ENCODE measurements at regions of chr4 and their contacts with region 1.

Region 1: GRCh38 chr4:26860157-26860921 is at the start of gene STIM2:
- DNase-seq: peak; percentile 96 to 99 (median 97)
- ATAC-seq: peak; percentile 93 to 96 (median 94)
- H3K4me3 ChIP-seq: peak within 1 kb of the TSS; percentile 61 to 93 (median 82)
- H3K27ac ChIP-seq: peak within 1 kb of the TSS; percentile 56 to 97 (median 94)
- H3K4me1 ChIP-seq: peaks cover 0 to 63% (median 39%) of the 10 kb centered on the region in 12 donors
- H3K27me3 ChIP-seq: no peaks in the 10 kb centered on the region
- CTCF ChIP-seq: peak in 10 of 12 donors; percentile 12 to 55 (median 32)
- POLR2A ChIP-seq: peak in 1 of 2 donors; percentile 94
- total RNA-seq, gene STIM2: 7.5 to 17.3 (median 9.9) TPM

Region 2: GRCh38 chr4:26459054-26459755 is 401.1 kb before region 1 on chr4:
- intact Hi-C with region 1: loop called in 1 of 10 experiments (anchors 10 kb)
- DNase-seq: no peak
- ATAC-seq: peak in 2 of 4 donors; percentile 59 to 60
- H3K4me3 ChIP-seq: no peak overlapping the region
- H3K27ac ChIP-seq: peak overlapping the region in 1 of 12 donors; percentile 29
- H3K4me1 ChIP-seq: peaks cover 0 to 6% (median 0%) of the 10 kb centered on the region in 12 donors
- H3K27me3 ChIP-seq: no peaks in the 10 kb centered on the region
- CTCF ChIP-seq: peak; percentile 38 to 68 (median 57)
- POLR2A ChIP-seq: no peak

Region 3: GRCh38 chr4:26692014-26692726 is 168.2 kb before region 1 on chr4:
- intact Hi-C with region 1: no loop called
- DNase-seq: no peak
- ATAC-seq: no peak
- H3K4me3 ChIP-seq: no peak overlapping the region
- H3K27ac ChIP-seq: no peak overlapping the region
- H3K4me1 ChIP-seq: no peaks in the 10 kb centered on the region
- H3K27me3 ChIP-seq: no peaks in the 10 kb centered on the region
- CTCF ChIP-seq: no peak
- POLR2A ChIP-seq: no peak

Region 4: GRCh38 chr4:26787461-26788340 is 72.6 kb before region 1 on chr4:
- intact Hi-C with region 1: loop called in 2 of 10 experiments (anchors 2 to 5 kb)
- DNase-seq: peak; percentile 42 to 67 (median 53)
- ATAC-seq: peak; percentile 52 to 83 (median 75)
- H3K4me3 ChIP-seq: peak overlapping the region in 1 of 12 donors; percentile 11
- H3K27ac ChIP-seq: peak overlapping the region in 10 of 12 donors; percentile 25 to 66 (median 52)
- H3K4me1 ChIP-seq: peaks cover 0 to 28% (median 18%) of the 10 kb centered on the region in 12 donors
- H3K27me3 ChIP-seq: no peaks in the 10 kb centered on the region
- CTCF ChIP-seq: peak; percentile 32 to 63 (median 45)
- POLR2A ChIP-seq: no peak

Region 5: DNA sequence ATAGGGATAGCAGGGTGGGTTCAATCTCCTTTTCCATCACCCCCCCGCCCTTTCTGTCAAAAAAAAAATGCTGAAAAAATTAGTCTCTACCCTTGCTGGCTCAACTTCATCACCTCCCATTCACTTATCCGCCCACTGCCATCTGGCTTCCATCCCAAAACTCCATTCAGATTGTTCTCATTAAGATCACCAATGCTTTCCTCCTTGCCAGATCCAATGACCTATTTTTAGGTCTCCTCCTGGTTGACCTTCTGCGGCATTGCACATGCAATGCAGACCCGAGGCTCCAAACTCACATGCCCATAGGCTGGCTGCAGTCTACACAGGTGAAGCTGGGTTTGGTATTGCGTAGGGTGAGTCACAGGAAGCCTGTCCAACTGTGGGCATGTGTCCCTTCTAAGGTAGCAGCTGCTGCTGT is 20.8 kb before region 1 on chr4:
- intact Hi-C with region 1: loop called in 1 of 10 experiments (anchors 2 kb)
- DNase-seq: peak in 3 of 5 donors; percentile 30 to 38 (median 33)
- ATAC-seq: peak in 3 of 4 donors; percentile 30 to 72 (median 72)
- H3K4me3 ChIP-seq: no peak overlapping the region
- H3K27ac ChIP-seq: no peak overlapping the region
- H3K4me1 ChIP-seq: peaks cover 0 to 20% (median 10%) of the 10 kb centered on the region in 12 donors
- H3K27me3 ChIP-seq: no peaks in the 10 kb centered on the region
- CTCF ChIP-seq: peak in 1 of 12 donors; percentile 11
- POLR2A ChIP-seq: no peak

Region 6: DNA sequence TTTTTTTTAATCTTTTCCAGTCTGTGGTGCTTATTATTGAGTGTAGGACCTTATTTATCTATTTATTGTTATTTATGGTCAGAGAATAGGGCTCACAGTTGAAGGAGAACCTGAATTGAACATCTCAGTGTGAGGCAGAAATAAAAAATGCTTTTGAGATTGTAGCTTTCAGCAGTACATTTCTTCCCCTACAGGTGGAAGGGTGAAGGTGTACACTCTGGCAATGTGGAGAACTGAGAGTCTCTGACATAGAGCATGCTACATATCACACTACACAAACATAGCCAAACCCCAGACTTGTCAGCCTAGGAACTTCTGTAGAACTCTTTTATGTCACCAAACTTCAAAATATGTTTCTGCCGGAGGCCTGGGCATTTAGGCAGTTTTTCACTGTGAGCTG is 140.5 kb after region 1 on chr4:
- intact Hi-C with region 1: loop called in 5 of 10 experiments (anchors 5 kb)
- DNase-seq: no peak
- ATAC-seq: no peak
- H3K4me3 ChIP-seq: no peak overlapping the region
- H3K27ac ChIP-seq: no peak overlapping the region
- H3K4me1 ChIP-seq: peaks cover 0 to 8% (median 0%) of the 10 kb centered on the region in 12 donors
- H3K27me3 ChIP-seq: no peaks in the 10 kb centered on the region
- CTCF ChIP-seq: peak in 1 of 12 donors; percentile 9
- POLR2A ChIP-seq: no peak

Measured in heart left ventricle (tissue), 16 donors.